ENCODE measurements at regions of chr9 and their contacts with region 1.

Region 1: GRCh38 chr9:136011703-136012521 is 50.7 kb upstream of the UBAC1 start:
- DNase-seq: peak; percentile 70
- H3K4me3 ChIP-seq: no peak overlapping the region
- H3K27ac ChIP-seq: peak overlapping the region; percentile 76
- H3K4me1 ChIP-seq: peaks cover 54% of the 10 kb centered on the region
- H3K27me3 ChIP-seq: no peaks in the 10 kb centered on the region
- CTCF ChIP-seq: no peak
- POLR2A ChIP-seq: no peak

Region 2: GRCh38 chr9:135624282-135624681 is 387.6 kb before region 1 on chr9:
- CTCF ChIA-PET with region 1: no interaction called
- POLR2A ChIA-PET with region 1: no interaction called
- dilution Hi-C with region 1: no loop called
- intact Hi-C with region 1: no loop called
- DNase-seq: no peak
- H3K4me3 ChIP-seq: no peak overlapping the region
- H3K27ac ChIP-seq: no peak overlapping the region
- H3K4me1 ChIP-seq: no peaks in the 10 kb centered on the region
- H3K27me3 ChIP-seq: peaks cover 0 to 4% of the 10 kb centered on the region in 2 experiments
- CTCF ChIP-seq: no peak
- POLR2A ChIP-seq: no peak

Region 3: GRCh38 chr9:135907431-135908092 is 104.3 kb before region 1 on chr9 and contains the start of gene CAMSAP1:
- CTCF ChIA-PET with region 1: no interaction called
- POLR2A ChIA-PET with region 1: no interaction called
- dilution Hi-C with region 1: no loop called
- intact Hi-C with region 1: loop called (anchors 1 kb)
- DNase-seq: peak; percentile 95
- H3K4me3 ChIP-seq: peak within 1 kb of the TSS; percentile 42 to 84 (median 73)
- H3K27ac ChIP-seq: peak within 1 kb of the TSS; percentile 45
- H3K4me1 ChIP-seq: peaks cover 36% of the 10 kb centered on the region
- H3K27me3 ChIP-seq: no peaks in the 10 kb centered on the region
- CTCF ChIP-seq: no peak
- POLR2A ChIP-seq: peak; percentile 45
- total RNA-seq, gene CAMSAP1: 25.5 and 30.6 TPM in 2 replicates

Region 4: GRCh38 chr9:135992486-135993408 is 19.2 kb before region 1 on chr9:
- CTCF ChIA-PET with region 1: interaction called, 4 read pairs
- POLR2A ChIA-PET with region 1: no interaction called
- dilution Hi-C with region 1: no loop called
- intact Hi-C with region 1: loop called (anchors 1 kb)
- DNase-seq: peak; percentile 81
- H3K4me3 ChIP-seq: no peak overlapping the region
- H3K27ac ChIP-seq: peak overlapping the region; percentile 86
- H3K4me1 ChIP-seq: peaks cover 22% of the 10 kb centered on the region
- H3K27me3 ChIP-seq: no peaks in the 10 kb centered on the region
- CTCF ChIP-seq: no peak
- POLR2A ChIP-seq: peak; percentile 69

Region 5: DNA sequence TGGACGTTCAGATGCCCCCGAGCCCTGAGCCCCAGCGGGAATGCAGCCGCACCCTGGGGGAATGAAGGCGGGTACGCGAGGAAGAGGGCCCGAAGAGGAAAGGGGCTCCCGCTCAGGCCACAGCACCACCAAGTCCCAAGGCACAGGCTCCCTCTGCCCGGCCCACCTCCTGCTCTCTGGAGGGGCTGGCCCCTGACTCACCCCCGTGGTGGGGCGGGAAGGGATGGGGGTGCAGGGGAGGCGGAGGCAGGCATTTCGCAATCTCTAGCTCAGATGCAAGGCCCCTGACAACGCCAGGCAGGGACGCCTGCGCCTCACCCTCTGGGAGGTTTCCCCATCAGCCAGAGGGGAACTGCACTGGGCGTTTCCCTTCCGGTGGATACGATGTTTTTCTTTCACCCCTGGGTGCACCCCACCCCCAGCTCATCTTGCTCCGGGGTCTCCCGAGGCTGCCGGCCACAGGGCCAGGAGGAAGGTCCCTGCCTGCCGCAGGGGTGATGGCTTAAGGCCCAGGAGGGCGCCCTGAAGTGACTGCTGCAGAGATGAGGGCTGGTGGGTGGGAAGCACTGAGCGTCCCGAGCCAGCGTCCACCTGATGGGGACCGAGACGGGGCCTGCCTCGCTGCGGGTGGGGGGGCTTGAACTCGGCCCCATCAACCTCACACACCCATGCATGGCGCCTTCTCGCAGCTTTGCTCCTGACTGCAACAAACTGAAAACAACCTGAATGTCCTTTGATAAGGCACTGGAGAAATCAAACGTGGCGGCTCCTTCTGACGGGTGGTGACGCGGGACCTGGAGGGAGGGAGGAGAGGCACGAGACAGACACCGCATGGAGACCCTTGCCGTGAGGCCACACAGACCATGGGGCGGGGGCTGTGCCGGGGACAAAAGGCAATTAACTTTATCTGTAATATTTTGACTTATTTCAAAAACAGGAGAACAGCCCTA is 34.3 kb after region 1 on chr9:
- CTCF ChIA-PET with region 1: no interaction called
- POLR2A ChIA-PET with region 1: no interaction called
- dilution Hi-C with region 1: no loop called
- intact Hi-C with region 1: no loop called
- DNase-seq: no peak
- H3K4me3 ChIP-seq: no peak overlapping the region
- H3K27ac ChIP-seq: no peak overlapping the region
- H3K4me1 ChIP-seq: peaks cover 15% of the 10 kb centered on the region
- H3K27me3 ChIP-seq: no peaks in the 10 kb centered on the region
- CTCF ChIP-seq: no peak
- POLR2A ChIP-seq: no peak

Region 6: GRCh38 chr9:136204838-136205706 is 193.2 kb after region 1 on chr9 and contains the start of gene LHX3:
- CTCF ChIA-PET with region 1: no interaction called
- POLR2A ChIA-PET with region 1: no interaction called
- dilution Hi-C with region 1: no loop called
- intact Hi-C with region 1: no loop called
- DNase-seq: peak; percentile 9
- H3K4me3 ChIP-seq: no peak within 1 kb of the TSS
- H3K27ac ChIP-seq: no peak within 1 kb of the TSS
- H3K4me1 ChIP-seq: no peaks in the 10 kb centered on the region
- H3K27me3 ChIP-seq: peaks cover 34 to 46% of the 10 kb centered on the region in 2 experiments
- CTCF ChIP-seq: no peak
- POLR2A ChIP-seq: no peak
- total RNA-seq, gene LHX3: not detected in 2 replicates